Activated T-helper 2 cell treated with anti-CD3 and anti-CD28 coated beads, Interferon-gamma antibody, Interleukin-2, Interleukin-4, amounts not matched to agents 10 μg/mL and 5 μg/mL and 100 μg/mL, durations not matched to agents 14 hours and 24 hours and 36 hours (primary cell): ENCODE measurements at regions of chr5 and their contacts with region 1.

Region 1: DNA sequence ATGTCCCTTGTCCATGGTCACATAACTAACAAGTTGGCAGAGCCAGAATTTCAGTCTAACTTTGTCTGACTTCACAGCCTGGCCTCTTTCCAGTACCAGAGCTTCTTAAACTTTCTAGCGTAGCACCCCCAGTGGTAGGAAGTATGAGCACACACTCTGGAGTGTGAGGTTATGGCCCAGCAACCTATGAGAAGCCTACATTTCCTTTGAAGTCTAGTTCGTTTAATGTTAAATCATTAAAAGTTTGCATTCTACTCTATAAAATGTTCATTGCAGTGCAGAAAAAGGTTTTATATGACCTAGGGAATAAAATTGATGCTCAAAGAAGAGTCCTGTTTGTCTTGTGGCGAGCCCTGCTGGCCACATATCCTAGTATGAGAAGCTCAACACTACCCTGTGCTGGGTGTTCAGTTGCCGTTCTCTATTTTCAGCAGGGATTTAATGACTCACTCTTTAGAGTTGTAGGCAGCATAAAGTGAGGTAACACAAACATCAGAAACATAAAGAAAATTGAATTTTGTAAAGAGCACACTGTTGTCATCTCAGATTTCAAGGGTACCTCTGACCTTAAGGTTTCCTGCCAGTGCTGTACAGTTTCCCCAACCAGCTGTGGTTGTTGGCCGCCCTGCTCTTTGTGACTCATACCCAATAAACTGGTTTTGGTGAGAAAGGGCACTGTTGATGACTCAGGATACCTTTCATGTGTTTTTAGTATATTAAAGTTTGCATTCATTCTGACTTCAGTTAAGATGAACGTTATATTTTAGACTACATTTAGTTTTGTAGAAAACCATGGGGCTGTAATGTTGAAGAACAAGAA is 14.3 kb downstream of the MCCC2 start:
- DNase-seq: peak; percentile 66
- H3K4me3 Mint-ChIP-seq: peak overlapping the region; percentile 52
- H3K27ac Mint-ChIP-seq: peak overlapping the region; percentile 96
- H3K4me1 Mint-ChIP-seq: peaks cover 37% of the 10 kb centered on the region
- H3K27me3 Mint-ChIP-seq: no peaks in the 10 kb centered on the region

Region 2: GRCh38 chr5:71455427-71456361 is 145.7 kb before region 1 on chr5 and contains the start of gene BDP1:
- intact Hi-C with region 1: loop called (anchors 5 kb)
- DNase-seq: peak; percentile 94
- H3K4me3 Mint-ChIP-seq: peak within 1 kb of the TSS; percentile 89
- H3K27ac Mint-ChIP-seq: peak within 1 kb of the TSS; percentile 97
- H3K4me1 Mint-ChIP-seq: peaks cover 15% of the 10 kb centered on the region
- H3K27me3 Mint-ChIP-seq: no peaks in the 10 kb centered on the region
- total RNA-seq, gene BDP1: 36.1 and 36.9 TPM in 2 replicates

Region 3: GRCh38 chr5:72319976-72320752 is 718.7 kb after region 1 on chr5 and contains the starts of genes MRPS27 and PTCD2:
- intact Hi-C with region 1: loop called (anchors 5 kb)
- DNase-seq: peak; percentile 93
- H3K4me3 Mint-ChIP-seq: peak within 1 kb of the TSS; percentile 93
- H3K27ac Mint-ChIP-seq: peak within 1 kb of the TSS; percentile 85
- H3K4me1 Mint-ChIP-seq: peaks cover 31% of the 10 kb centered on the region
- H3K27me3 Mint-ChIP-seq: no peaks in the 10 kb centered on the region
- total RNA-seq, gene MRPS27: 96.8 and 98.4 TPM in 2 replicates
- total RNA-seq, gene PTCD2: 14.7 and 16.8 TPM in 2 replicates